MCF 10A (cell line): ENCODE measurements at regions of chr1 and their contacts with region 1.

Region 1: DNA sequence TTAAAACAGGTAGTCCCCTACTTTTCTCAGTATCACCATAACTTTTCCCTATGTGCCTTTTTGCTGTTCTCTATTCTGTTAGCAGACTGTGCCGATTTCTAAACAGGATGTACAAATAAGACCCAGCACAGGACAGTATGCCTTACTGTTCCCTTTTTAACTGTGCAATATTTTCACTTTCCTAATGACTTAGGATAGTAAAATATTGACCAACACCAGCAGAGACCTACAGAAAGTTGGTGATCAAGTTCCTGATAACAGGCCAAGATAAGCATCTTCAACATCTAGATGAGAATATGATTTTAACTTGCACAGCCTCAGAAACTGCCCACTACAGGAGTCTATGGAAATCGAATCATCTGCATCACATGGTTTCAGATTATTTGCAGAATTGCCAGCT is 42.0 kb downstream of the ADSS2 start:
- DNase-seq: no peak
- H3K4me3 Mint-ChIP-seq: no peak overlapping the region
- H3K27ac Mint-ChIP-seq: no peak overlapping the region
- H3K4me1 Mint-ChIP-seq: peaks cover 16% of the 10 kb centered on the region
- H3K27me3 Mint-ChIP-seq: no peaks in the 10 kb centered on the region
- CTCF ChIP-seq: no peak

Region 2: GRCh38 chr1:244335456-244335855 is 74.2 kb before region 1 on chr1:
- CTCF ChIA-PET with region 1: no interaction called
- POLR2A ChIA-PET with region 1: no interaction called
- intact Hi-C with region 1: no loop called
- DNase-seq: no peak
- H3K4me3 Mint-ChIP-seq: no peak overlapping the region
- H3K27ac Mint-ChIP-seq: no peak overlapping the region
- H3K4me1 Mint-ChIP-seq: peaks cover 6% of the 10 kb centered on the region
- H3K27me3 Mint-ChIP-seq: no peaks in the 10 kb centered on the region
- CTCF ChIP-seq: no peak

Region 3: DNA sequence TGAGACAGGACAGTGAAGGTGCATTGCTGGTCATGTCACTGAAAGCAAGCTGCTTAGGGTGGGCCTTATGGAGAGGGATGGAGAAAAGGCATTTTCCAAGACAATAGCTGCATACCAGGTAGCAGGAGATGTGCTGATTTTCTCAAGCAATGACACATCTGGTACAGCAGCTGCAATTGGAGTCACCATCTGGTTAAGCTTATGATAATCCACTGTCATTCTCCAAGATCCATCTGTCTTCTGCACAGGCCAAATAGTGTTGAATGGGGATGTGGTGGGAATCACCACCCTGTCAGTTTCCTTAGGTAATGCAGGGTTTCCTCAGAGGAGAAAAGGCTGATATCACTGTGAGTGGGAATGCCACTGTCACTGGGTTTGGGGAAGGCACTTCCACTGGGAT is 12.6 kb before region 1 on chr1:
- CTCF ChIA-PET with region 1: interaction called, 14 read pairs
- POLR2A ChIA-PET with region 1: interaction called, 31 read pairs
- intact Hi-C with region 1: no loop called
- DNase-seq: no peak
- H3K4me3 Mint-ChIP-seq: no peak overlapping the region
- H3K27ac Mint-ChIP-seq: no peak overlapping the region
- H3K4me1 Mint-ChIP-seq: peaks cover 16% of the 10 kb centered on the region
- H3K27me3 Mint-ChIP-seq: no peaks in the 10 kb centered on the region
- CTCF ChIP-seq: no peak

Region 4: GRCh38 chr1:244424649-244425334 is 15.1 kb after region 1 on chr1:
- CTCF ChIA-PET with region 1: interaction called, 36 read pairs
- POLR2A ChIA-PET with region 1: interaction called, 9 read pairs
- intact Hi-C with region 1: no loop called
- DNase-seq: no peak
- H3K4me3 Mint-ChIP-seq: no peak overlapping the region
- H3K27ac Mint-ChIP-seq: peak overlapping the region; percentile 17
- H3K4me1 Mint-ChIP-seq: peaks cover 5% of the 10 kb centered on the region
- H3K27me3 Mint-ChIP-seq: no peaks in the 10 kb centered on the region
- CTCF ChIP-seq: no peak

Region 5: DNA sequence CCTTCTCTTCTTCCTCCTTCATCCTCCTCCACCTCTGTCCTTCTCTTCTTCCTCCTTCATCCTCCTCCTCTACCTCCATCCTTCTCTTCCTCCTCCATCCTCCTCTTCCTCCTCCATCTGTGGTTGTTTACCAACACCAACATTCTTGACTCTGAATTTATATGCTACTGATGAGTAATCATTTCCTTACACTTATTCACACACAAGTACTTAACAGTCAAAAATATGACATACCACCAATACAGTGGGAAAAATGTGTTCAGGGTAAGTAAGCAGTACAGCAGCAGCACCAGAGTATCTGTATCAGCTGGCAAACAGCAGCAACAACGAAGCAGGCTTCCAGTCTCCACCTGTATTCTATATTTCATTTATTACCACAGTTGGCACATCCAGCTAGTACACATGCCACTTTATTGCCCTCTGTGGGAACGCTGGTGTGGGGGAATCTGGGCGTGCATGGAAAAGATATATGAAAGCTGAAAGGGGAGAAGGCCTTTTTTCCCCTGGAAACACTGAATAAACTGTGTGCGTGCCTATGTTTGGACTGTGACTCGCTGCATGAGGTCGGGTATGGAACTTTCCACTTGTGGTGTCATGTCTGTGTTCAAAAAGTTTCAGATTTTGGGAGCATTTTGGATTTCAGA is 26.0 kb after region 1 on chr1:
- CTCF ChIA-PET with region 1: interaction called, 7 read pairs
- POLR2A ChIA-PET with region 1: interaction called, 11 read pairs
- intact Hi-C with region 1: no loop called
- DNase-seq: peak; percentile 73
- H3K4me3 Mint-ChIP-seq: peak overlapping the region; percentile 55
- H3K27ac Mint-ChIP-seq: peak overlapping the region; percentile 76
- H3K4me1 Mint-ChIP-seq: peaks cover 59% of the 10 kb centered on the region
- H3K27me3 Mint-ChIP-seq: no peaks in the 10 kb centered on the region
- CTCF ChIP-seq: no peak

Region 6: DNA sequence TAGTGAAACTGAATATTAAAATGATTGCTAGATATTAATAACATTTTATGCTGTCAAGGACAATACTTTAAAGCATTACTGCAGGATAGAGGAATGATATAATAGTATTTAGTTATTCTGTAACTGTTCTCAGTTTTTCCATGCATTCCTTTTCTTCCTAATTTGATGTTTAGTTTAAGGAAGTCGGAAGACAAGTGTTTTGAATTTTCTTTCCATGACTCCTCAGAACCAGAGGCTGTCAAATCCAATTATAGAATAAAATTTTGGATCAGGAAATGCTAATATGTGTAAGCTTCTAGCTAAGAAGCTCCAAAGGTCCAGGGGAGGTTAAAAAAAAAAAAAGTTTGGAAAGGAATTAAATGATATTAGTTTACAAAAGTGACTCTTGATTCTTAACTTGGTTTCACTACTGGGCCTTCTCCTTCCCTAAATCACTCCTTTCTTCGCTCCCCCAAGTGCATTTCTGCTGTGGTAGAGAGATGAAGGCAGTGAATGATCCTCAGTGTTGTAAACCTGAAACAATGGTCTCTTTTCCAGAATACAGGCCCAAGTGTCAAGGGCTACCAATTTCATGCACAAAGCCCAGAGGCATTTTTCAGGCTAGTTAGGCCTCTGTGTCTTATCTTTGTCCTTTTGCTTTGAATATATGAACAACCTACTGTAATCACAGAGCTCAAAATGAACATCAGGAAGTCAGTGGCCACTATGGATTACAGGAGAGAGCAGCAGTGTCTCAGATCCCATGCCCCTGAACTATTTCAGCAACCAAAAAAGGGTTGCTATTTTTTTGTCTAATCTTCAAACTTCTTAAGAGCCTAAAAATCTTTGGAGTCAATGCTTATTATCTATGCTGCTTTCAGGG is 35.9 kb after region 1 on chr1:
- CTCF ChIA-PET with region 1: interaction called, 15 read pairs
- POLR2A ChIA-PET with region 1: interaction called, 15 read pairs
- intact Hi-C with region 1: no loop called
- DNase-seq: no peak
- H3K4me3 Mint-ChIP-seq: peak overlapping the region; percentile 26
- H3K27ac Mint-ChIP-seq: peak overlapping the region; percentile 47
- H3K4me1 Mint-ChIP-seq: peaks cover 65% of the 10 kb centered on the region
- H3K27me3 Mint-ChIP-seq: no peaks in the 10 kb centered on the region
- CTCF ChIP-seq: no peak